ENCODE measurements at regions of chr3 and their contacts with region 1.

Region 1: DNA sequence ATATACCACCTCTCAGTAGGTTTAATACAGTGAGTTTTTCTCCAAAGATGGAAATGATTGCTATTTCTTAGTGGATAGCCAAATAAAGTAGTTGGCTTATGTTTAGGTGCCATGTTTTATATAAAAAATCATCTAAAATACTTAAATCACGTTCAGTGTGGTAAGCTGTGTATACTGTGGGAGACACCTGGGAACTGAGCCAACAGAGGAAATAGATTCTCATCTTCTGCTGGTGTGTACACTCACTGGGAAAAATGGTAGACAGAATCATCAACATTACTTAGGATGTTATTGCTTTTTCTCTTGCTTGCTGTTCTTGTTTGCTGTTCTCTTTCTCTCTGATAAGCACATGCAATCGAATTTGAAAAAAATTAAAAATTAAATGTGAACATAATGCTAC is 112.6 kb upstream of the MB21D2 start:
- DNase-seq: no peak
- H3K4me3 ChIP-seq: no peak overlapping the region
- H3K27ac ChIP-seq: no peak overlapping the region
- H3K4me1 ChIP-seq: no peaks in the 10 kb centered on the region
- H3K27me3 ChIP-seq: peaks cover 3% of the 10 kb centered on the region
- CTCF ChIP-seq: no peak
- POLR2A ChIP-seq: no peak

Region 2: GRCh38 chr3:192825657-192826200 is 204.5 kb before region 1 on chr3:
- intact Hi-C with region 1: loop called (anchors 5 kb)
- DNase-seq: no peak
- H3K4me3 ChIP-seq: no peak overlapping the region
- H3K27ac ChIP-seq: no peak overlapping the region
- H3K4me1 ChIP-seq: peaks cover 0 to 6% of the 10 kb centered on the region in 2 donors
- H3K27me3 ChIP-seq: no peaks in the 10 kb centered on the region
- CTCF ChIP-seq: no peak
- POLR2A ChIP-seq: no peak

Region 3: GRCh38 chr3:193114431-193115340 is 84.4 kb after region 1 on chr3:
- intact Hi-C with region 1: no loop called
- DNase-seq: peak; percentile 16 to 38
- H3K4me3 ChIP-seq: no peak overlapping the region
- H3K27ac ChIP-seq: no peak overlapping the region
- H3K4me1 ChIP-seq: no peaks in the 10 kb centered on the region
- H3K27me3 ChIP-seq: no peaks in the 10 kb centered on the region
- CTCF ChIP-seq: no peak
- POLR2A ChIP-seq: no peak